Activated CD4-positive, alpha-beta T cell treated with anti-CD3 and anti-CD28 coated beads for 36 hours (primary cell): ENCODE measurements at regions of chr17 and their contacts with region 1.

Region 1: GRCh38 chr17:46940621-46941404 is 17.9 kb downstream of the GOSR2 start:
- DNase-seq: peak; percentile 85
- ATAC-seq: peak; percentile 90
- H3K4me3 Mint-ChIP-seq: no peak overlapping the region
- H3K27ac Mint-ChIP-seq: peak overlapping the region; percentile 76
- H3K4me1 Mint-ChIP-seq: peaks cover 18% of the 10 kb centered on the region
- H3K27me3 Mint-ChIP-seq: no peaks in the 10 kb centered on the region

Region 2: DNA sequence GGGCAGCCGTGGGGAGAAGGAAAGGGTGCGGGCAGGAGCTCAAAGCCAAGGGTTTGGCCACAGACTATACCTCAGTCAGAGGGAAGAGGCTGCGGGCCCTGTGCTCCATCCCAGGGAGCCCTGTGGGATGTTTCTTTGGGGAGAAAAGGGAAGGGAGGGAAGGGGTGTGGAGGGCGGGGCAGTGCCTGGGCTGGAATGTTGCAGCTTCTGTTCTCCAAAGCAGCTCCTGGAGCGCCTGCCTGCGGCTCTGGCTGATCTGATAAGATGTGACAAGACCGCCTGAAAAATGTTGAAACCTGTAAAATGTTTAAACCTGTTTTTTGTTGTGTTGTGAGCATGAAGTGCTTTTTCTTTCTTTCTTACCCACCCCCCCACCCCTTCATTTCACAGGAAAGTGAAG is 155.1 kb before region 1 on chr17:
- CTCF ChIA-PET with region 1: no interaction called
- POLR2A ChIA-PET with region 1: no interaction called
- intact Hi-C with region 1: no loop called
- DNase-seq: no peak
- ATAC-seq: no peak
- H3K4me3 Mint-ChIP-seq: no peak overlapping the region
- H3K27ac Mint-ChIP-seq: no peak overlapping the region
- H3K4me1 Mint-ChIP-seq: no peaks in the 10 kb centered on the region
- H3K27me3 Mint-ChIP-seq: peaks cover 3% of the 10 kb centered on the region

Region 3: GRCh38 chr17:46841561-46842379 is 99.0 kb before region 1 on chr17:
- CTCF ChIA-PET with region 1: interaction called, 36 read pairs
- POLR2A ChIA-PET with region 1: no interaction called
- intact Hi-C with region 1: loop called (anchors 1 to 2 kb)
- DNase-seq: peak; percentile 56
- ATAC-seq: peak; percentile 51
- H3K4me3 Mint-ChIP-seq: no peak overlapping the region
- H3K27ac Mint-ChIP-seq: no peak overlapping the region
- H3K4me1 Mint-ChIP-seq: no peaks in the 10 kb centered on the region
- H3K27me3 Mint-ChIP-seq: peaks cover 37% of the 10 kb centered on the region

Region 4: GRCh38 chr17:46883871-46884520 is 56.8 kb before region 1 on chr17:
- CTCF ChIA-PET with region 1: no interaction called
- POLR2A ChIA-PET with region 1: no interaction called
- intact Hi-C with region 1: no loop called
- DNase-seq: no peak
- ATAC-seq: no peak
- H3K4me3 Mint-ChIP-seq: no peak overlapping the region
- H3K27ac Mint-ChIP-seq: no peak overlapping the region
- H3K4me1 Mint-ChIP-seq: no peaks in the 10 kb centered on the region
- H3K27me3 Mint-ChIP-seq: no peaks in the 10 kb centered on the region

Region 5: DNA sequence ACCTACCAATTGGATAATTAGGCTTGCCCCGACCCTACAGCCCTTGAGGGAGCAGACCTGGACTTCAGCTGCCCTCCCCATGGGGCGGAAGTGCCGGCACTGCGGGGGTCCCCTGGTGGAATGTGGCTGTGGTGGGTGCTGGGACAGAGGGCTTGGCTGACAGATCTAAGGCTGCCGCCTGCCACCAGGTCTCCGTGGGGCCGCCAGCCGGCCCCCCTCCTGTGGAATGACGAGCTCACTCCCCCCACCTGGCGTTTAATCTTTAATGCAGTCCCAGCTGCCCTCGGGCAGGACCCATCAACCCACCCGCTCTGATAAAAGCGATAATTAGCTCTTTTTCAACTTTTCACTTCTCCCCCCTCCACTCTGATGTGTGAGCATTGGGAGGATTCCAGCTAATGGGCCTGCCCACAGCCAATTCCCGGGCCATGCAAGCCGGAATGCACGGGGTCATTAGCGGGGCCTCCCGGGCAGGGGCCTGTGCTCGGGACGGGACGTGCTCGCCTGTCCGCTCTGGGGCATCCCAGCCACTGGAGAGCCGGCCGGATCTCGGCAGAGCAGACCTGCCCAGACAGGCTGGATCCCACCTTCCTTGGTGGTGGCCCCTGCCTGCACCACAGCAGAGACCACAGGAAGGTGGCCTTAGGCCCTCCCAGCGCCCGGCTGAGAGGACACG is 46.2 kb before region 1 on chr17:
- CTCF ChIA-PET with region 1: no interaction called
- POLR2A ChIA-PET with region 1: no interaction called
- intact Hi-C with region 1: no loop called
- DNase-seq: no peak
- ATAC-seq: no peak
- H3K4me3 Mint-ChIP-seq: no peak overlapping the region
- H3K27ac Mint-ChIP-seq: no peak overlapping the region
- H3K4me1 Mint-ChIP-seq: no peaks in the 10 kb centered on the region
- H3K27me3 Mint-ChIP-seq: peaks cover 6% of the 10 kb centered on the region

Region 6: DNA sequence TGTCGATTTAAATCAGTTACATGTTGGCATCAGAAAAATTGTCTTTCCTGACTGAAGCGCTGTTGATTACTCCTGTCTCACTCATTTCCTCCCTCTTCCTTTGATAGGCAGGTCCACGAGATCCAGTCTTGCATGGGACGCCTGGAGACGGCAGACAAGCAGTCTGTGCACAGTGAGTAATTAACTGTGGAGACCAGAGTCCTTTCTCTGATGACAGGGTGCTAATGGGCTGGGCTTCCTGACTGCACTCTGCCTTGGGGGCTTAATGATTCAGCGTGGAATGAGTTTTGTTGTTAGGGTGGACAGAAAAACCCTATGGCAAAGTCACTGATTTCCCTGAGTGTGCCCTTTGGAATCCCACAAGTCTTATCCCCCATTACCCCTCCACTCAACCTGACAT is 11.4 kb before region 1 on chr17:
- CTCF ChIA-PET with region 1: interaction called, 18 read pairs
- POLR2A ChIA-PET with region 1: no interaction called
- intact Hi-C with region 1: no loop called
- DNase-seq: no peak
- ATAC-seq: no peak
- H3K4me3 Mint-ChIP-seq: no peak overlapping the region
- H3K27ac Mint-ChIP-seq: no peak overlapping the region
- H3K4me1 Mint-ChIP-seq: peaks cover 40% of the 10 kb centered on the region
- H3K27me3 Mint-ChIP-seq: no peaks in the 10 kb centered on the region

Region 7: GRCh38 chr17:47004906-47005305 is 64.1 kb after region 1 on chr17:
- CTCF ChIA-PET with region 1: interaction called, 5 read pairs
- POLR2A ChIA-PET with region 1: no interaction called
- intact Hi-C with region 1: loop called (anchors 1 to 5 kb)
- DNase-seq: no peak
- ATAC-seq: no peak
- H3K4me3 Mint-ChIP-seq: no peak overlapping the region
- H3K27ac Mint-ChIP-seq: no peak overlapping the region
- H3K4me1 Mint-ChIP-seq: peaks cover 2% of the 10 kb centered on the region
- H3K27me3 Mint-ChIP-seq: no peaks in the 10 kb centered on the region

Region 8: GRCh38 chr17:47315451-47316266 is 374.8 kb after region 1 on chr17:
- CTCF ChIA-PET with region 1: no interaction called
- POLR2A ChIA-PET with region 1: no interaction called
- intact Hi-C with region 1: loop called in 1 of 2 experiments (anchors 5 kb)
- DNase-seq: no peak
- ATAC-seq: peak; percentile 65
- H3K4me3 Mint-ChIP-seq: no peak overlapping the region
- H3K27ac Mint-ChIP-seq: no peak overlapping the region
- H3K4me1 Mint-ChIP-seq: peaks cover 2% of the 10 kb centered on the region
- H3K27me3 Mint-ChIP-seq: no peaks in the 10 kb centered on the region

Region 9: DNA sequence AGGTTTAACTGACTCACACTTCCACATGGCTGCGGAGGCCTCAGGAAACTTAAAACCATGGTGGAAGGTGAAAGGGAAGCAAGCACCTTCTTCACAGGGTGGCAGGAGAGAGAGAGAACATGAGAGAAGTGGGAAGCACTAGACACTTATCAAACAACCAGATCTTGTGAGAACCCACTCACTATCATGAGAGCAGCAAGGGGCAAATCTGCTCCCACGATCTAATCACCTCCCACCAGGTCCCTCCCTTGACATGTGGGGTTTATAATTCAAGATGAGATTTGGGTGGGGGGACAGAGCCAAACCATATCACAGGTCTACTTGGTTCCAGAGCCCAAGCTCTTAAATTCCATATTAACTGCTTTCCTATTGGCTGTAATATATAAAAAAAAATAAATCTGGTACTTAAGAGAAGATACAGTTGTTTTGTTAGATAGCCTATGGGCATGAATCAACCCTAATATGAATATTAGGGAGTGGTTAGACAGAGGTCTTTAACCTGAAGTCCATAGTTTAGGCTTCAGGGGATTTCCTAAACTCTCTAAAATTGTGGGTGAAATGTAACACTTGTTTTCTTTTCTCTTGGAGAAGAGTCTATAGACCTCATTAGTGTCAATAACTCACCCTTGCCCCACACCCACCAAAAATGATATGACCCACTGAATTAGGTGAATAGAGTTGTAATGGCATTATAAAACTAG is 1432.5 kb after region 1 on chr17:
- CTCF ChIA-PET with region 1: no interaction called
- POLR2A ChIA-PET with region 1: no interaction called
- intact Hi-C with region 1: no loop called
- DNase-seq: no peak
- ATAC-seq: no peak
- H3K4me3 Mint-ChIP-seq: no peak overlapping the region
- H3K27ac Mint-ChIP-seq: peak overlapping the region; percentile 23
- H3K4me1 Mint-ChIP-seq: peaks cover 29% of the 10 kb centered on the region
- H3K27me3 Mint-ChIP-seq: no peaks in the 10 kb centered on the region